ENCODE measurements at regions of chr3 and their contacts with region 1.

Region 1: GRCh38 chr3:49856181-49857005 is at the start of gene TRAIP:
- DNase-seq: peak; percentile 93
- H3K4me3 Mint-ChIP-seq: peak within 1 kb of the TSS; percentile 97
- H3K27ac Mint-ChIP-seq: peak within 1 kb of the TSS; percentile 93
- H3K4me1 Mint-ChIP-seq: peaks cover 18% of the 10 kb centered on the region
- H3K27me3 Mint-ChIP-seq: no peaks in the 10 kb centered on the region
- total RNA-seq, gene TRAIP: 26.5 and 27.9 TPM in 2 replicates

Region 2: GRCh38 chr3:49120438-49121131 is 735.8 kb before region 1 on chr3 and contains the start of gene USP19:
- intact Hi-C with region 1: loop called (anchors 1 kb)
- DNase-seq: peak; percentile 94
- H3K4me3 Mint-ChIP-seq: peak within 1 kb of the TSS; percentile 90
- H3K27ac Mint-ChIP-seq: peak within 1 kb of the TSS; percentile 88
- H3K4me1 Mint-ChIP-seq: peaks cover 10% of the 10 kb centered on the region
- H3K27me3 Mint-ChIP-seq: peaks cover 1% of the 10 kb centered on the region
- total RNA-seq, gene USP19: 57.7 and 59.7 TPM in 2 replicates

Region 3: DNA sequence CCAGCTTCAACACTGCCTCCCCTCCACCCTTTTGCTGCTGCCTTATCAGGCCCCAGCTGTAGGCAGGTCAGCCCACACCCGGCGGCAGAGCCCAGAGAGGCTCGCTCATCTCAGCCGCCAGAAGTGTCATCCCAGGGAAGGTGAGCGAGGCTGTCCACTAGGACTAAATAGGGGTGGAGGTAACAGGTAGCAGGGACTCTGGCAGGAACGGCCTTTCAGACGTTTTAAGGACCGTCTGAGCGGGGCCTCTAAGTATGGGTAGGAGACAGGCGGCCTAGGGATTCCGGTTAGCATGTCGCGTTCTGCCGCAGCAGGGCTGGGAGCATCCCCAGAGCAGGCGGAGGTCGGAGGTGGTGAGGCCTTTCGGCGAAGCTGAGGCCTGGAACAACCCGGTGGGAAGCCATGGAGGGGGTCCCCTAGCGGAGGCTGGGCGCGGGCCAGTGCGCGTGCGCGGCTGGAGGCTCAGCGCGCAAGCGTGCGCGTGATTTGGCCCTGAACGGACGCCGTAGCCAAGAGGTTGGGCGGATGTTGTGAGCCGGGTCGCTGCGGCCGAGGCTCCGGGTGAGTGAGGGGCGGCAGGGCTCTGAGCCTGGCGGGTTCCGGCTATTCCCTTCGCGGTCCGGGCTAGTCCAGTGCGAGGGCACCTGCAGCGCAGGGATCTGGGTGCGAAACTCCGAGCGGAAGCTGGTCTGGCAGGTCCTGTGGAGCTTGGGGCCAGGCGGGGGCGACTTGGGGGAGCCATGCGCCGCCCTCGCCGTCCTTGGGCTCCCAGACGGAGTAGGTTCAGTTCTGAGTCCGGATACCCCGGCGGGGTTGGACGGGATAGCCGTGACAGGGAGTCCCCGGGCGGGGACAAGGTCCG is 167.1 kb before region 1 on chr3 and contains the starts of genes MST1 and RNF123:
- intact Hi-C with region 1: loop called (anchors 1 kb)
- DNase-seq: peak; percentile 91
- H3K4me3 Mint-ChIP-seq: peak within 1 kb of the TSS; percentile 97
- H3K27ac Mint-ChIP-seq: peak within 1 kb of the TSS; percentile 91
- H3K4me1 Mint-ChIP-seq: peaks cover 21% of the 10 kb centered on the region
- H3K27me3 Mint-ChIP-seq: peaks cover 2% of the 10 kb centered on the region
- total RNA-seq, gene MST1: 6.5 and 8.2 TPM in 2 replicates
- total RNA-seq, gene RNF123: 53.8 and 54.3 TPM in 2 replicates

Region 4: DNA sequence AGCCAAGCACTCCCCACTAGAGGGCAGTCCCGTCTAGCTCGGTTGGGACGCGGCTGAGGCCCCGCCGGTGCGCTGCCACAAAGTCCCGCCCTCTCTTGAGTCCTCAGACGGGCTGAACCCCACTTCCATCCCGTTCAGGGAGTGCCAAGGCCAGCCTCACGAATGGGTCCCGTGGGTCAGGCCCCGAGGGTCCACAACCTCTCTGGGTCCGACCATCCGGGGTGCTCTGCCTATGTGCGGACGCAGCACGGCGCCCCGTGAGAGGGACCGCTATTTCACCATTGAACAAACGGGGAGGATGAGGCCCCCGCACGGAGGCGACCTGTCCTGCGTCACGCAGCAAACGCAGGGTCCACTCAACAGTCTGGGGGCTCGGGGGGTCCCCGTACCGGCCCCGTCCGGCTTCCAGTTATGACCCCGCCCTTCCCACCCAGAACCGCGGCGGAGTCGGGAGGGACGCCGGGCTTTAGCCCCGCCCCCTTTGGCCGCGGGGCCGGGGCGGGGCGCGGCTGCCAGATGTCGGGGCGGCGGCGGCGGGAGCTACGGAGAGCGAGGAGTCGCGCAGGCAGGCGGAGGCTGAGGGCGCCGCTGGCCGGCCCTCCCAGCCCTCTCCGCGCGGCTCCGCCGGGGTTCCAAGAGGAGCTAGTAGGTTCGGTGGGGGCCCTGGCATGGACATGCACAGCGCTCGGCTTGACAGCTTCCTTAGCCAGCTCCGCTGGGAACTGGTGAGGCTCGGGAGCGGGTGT is 53.5 kb before region 1 on chr3 and contains the start of gene INKA1:
- intact Hi-C with region 1: loop called (anchors 1 kb)
- DNase-seq: peak; percentile 82
- H3K4me3 Mint-ChIP-seq: peak within 1 kb of the TSS; percentile 84
- H3K27ac Mint-ChIP-seq: peak within 1 kb of the TSS; percentile 70
- H3K4me1 Mint-ChIP-seq: peaks cover 23% of the 10 kb centered on the region
- H3K27me3 Mint-ChIP-seq: peaks cover 10% of the 10 kb centered on the region
- total RNA-seq, gene INKA1: 1.3 and 2.7 TPM in 2 replicates

Region 5: GRCh38 chr3:49869525-49870126 is 13.2 kb after region 1 on chr3 and contains the start of gene CAMKV:
- intact Hi-C with region 1: loop called (anchors 1 kb)
- DNase-seq: peak; percentile 30
- H3K4me3 Mint-ChIP-seq: peak within 1 kb of the TSS; percentile 42
- H3K27ac Mint-ChIP-seq: no peak within 1 kb of the TSS
- H3K4me1 Mint-ChIP-seq: no peaks in the 10 kb centered on the region
- H3K27me3 Mint-ChIP-seq: peaks cover 32% of the 10 kb centered on the region
- total RNA-seq, gene CAMKV: 0.96 and 1.0 TPM in 2 replicates

Region 6: GRCh38 chr3:49929331-49930240 is 73.2 kb after region 1 on chr3 and contains the start of gene MON1A:
- intact Hi-C with region 1: loop called (anchors 2 kb)
- DNase-seq: peak; percentile 88
- H3K4me3 Mint-ChIP-seq: peak within 1 kb of the TSS; percentile 90
- H3K27ac Mint-ChIP-seq: peak within 1 kb of the TSS; percentile 81
- H3K4me1 Mint-ChIP-seq: peaks cover 21% of the 10 kb centered on the region
- H3K27me3 Mint-ChIP-seq: no peaks in the 10 kb centered on the region
- total RNA-seq, gene MON1A: 15.5 and 17.3 TPM in 2 replicates

Region 7: GRCh38 chr3:50088725-50089608 is 232.6 kb after region 1 on chr3 and contains the start of gene RBM5:
- intact Hi-C with region 1: loop called (anchors 2 kb)
- DNase-seq: peak; percentile 91
- H3K4me3 Mint-ChIP-seq: peak within 1 kb of the TSS; percentile 97
- H3K27ac Mint-ChIP-seq: peak within 1 kb of the TSS; percentile 95
- H3K4me1 Mint-ChIP-seq: peaks cover 31% of the 10 kb centered on the region
- H3K27me3 Mint-ChIP-seq: no peaks in the 10 kb centered on the region
- total RNA-seq, gene RBM5: 157 and 162 TPM in 2 replicates

Measured in activated T-helper 1 cell treated with anti-CD3 and anti-CD28 coated beads, Interleukin-12 subunit alpha, Interleukin-12 subunit beta, Interleukin-2, Interleukin-4 antibody, amounts not matched to agents 30 ng/mL and 10 ng/mL and 1 ng/mL, durations not matched to agents 14 hours and 24 hours and 36 hours (primary cell).